ENCODE measurements at regions of chr14 and their contacts with region 1.

Region 1: GRCh38 chr14:50532502-50533240 is at the start of gene MAP4K5:
- DNase-seq: peak; percentile 94
- ATAC-seq: peak; percentile 96
- H3K4me3 Mint-ChIP-seq: peak within 1 kb of the TSS; percentile 90
- H3K27ac Mint-ChIP-seq: peak within 1 kb of the TSS; percentile 86
- H3K4me1 Mint-ChIP-seq: peaks cover 47% of the 10 kb centered on the region
- H3K27me3 Mint-ChIP-seq: no peaks in the 10 kb centered on the region
- total RNA-seq, gene MAP4K5: 19.1 to 31.2 TPM

Region 2: GRCh38 chr14:50116181-50116956 is 416.3 kb before region 1 on chr14 and contains the start of gene VCPKMT:
- CTCF ChIA-PET with region 1: interaction called, 5 read pairs
- POLR2A ChIA-PET with region 1: no interaction called
- intact Hi-C with region 1: loop called (anchors 1 to 2 kb)
- DNase-seq: peak; percentile 98
- ATAC-seq: peak; percentile 99
- H3K4me3 Mint-ChIP-seq: peak within 1 kb of the TSS; percentile 95
- H3K27ac Mint-ChIP-seq: peak within 1 kb of the TSS; percentile 97
- H3K4me1 Mint-ChIP-seq: peaks cover 25% of the 10 kb centered on the region
- H3K27me3 Mint-ChIP-seq: no peaks in the 10 kb centered on the region
- total RNA-seq, gene VCPKMT: 6.6 to 10.4 TPM

Region 3: DNA sequence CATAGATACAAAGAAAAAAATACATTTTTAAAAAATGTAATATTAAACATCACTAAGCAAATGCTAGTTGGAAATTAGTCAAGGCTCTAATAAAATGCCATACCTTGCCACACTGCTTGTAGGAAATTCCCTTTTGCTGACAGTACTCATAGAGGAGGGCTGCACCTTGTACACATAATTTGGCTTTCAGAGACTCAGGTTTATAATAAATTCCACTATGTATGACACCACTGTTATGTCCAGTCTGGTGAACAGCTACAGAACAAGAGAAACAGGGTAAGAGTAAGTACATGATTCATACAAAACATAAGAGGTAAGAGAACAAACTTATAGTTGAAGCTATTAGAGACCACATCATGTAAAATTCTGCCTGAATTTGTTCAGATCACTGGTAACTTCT is 230.8 kb before region 1 on chr14:
- CTCF ChIA-PET with region 1: no interaction called
- POLR2A ChIA-PET with region 1: no interaction called
- intact Hi-C with region 1: no loop called
- DNase-seq: no peak
- ATAC-seq: no peak
- H3K4me3 Mint-ChIP-seq: no peak overlapping the region
- H3K27ac Mint-ChIP-seq: no peak overlapping the region
- H3K4me1 Mint-ChIP-seq: peaks cover 3% of the 10 kb centered on the region
- H3K27me3 Mint-ChIP-seq: no peaks in the 10 kb centered on the region

Region 4: GRCh38 chr14:50342221-50343078 is 190.2 kb before region 1 on chr14:
- CTCF ChIA-PET with region 1: no interaction called
- POLR2A ChIA-PET with region 1: no interaction called
- intact Hi-C with region 1: loop called (anchors 1 kb)
- DNase-seq: peak; percentile 76
- ATAC-seq: no peak
- H3K4me3 Mint-ChIP-seq: no peak overlapping the region
- H3K27ac Mint-ChIP-seq: no peak overlapping the region
- H3K4me1 Mint-ChIP-seq: peaks cover 30% of the 10 kb centered on the region
- H3K27me3 Mint-ChIP-seq: peaks cover 3% of the 10 kb centered on the region

Region 5: GRCh38 chr14:50396631-50397390 is 135.9 kb before region 1 on chr14 and contains the start of gene CDKL1:
- CTCF ChIA-PET with region 1: no interaction called
- POLR2A ChIA-PET with region 1: no interaction called
- intact Hi-C with region 1: loop called in 1 of 2 experiments (anchors 2 kb)
- DNase-seq: peak; percentile 70
- ATAC-seq: peak; percentile 75
- H3K4me3 Mint-ChIP-seq: peak within 1 kb of the TSS; percentile 82
- H3K27ac Mint-ChIP-seq: peak within 1 kb of the TSS; percentile 72
- H3K4me1 Mint-ChIP-seq: peaks cover 14% of the 10 kb centered on the region
- H3K27me3 Mint-ChIP-seq: peaks cover 6% of the 10 kb centered on the region
- total RNA-seq, gene CDKL1: 2.9 to 4.4 TPM

Region 6: DNA sequence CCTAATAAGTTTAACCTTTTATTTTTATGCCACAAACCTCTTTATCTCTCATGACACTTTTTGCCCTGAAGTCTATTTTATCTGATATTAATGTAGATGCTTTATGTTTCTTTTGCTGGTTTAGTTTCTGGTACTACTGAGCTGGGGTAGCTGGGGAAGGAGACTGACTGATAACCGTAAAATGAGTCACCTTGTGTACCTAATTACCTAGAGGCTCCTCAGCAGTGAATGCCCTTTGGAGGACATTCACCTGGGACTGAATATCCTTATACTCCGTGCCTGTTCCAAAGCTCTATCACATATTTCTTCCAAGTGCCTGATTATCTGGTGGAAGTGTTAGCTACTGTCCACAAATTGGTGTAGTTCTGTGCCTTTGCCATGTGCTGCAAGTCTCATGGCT is 41.2 kb after region 1 on chr14:
- CTCF ChIA-PET with region 1: no interaction called
- POLR2A ChIA-PET with region 1: no interaction called
- intact Hi-C with region 1: no loop called
- DNase-seq: no peak
- ATAC-seq: peak; percentile 36
- H3K4me3 Mint-ChIP-seq: no peak overlapping the region
- H3K27ac Mint-ChIP-seq: no peak overlapping the region
- H3K4me1 Mint-ChIP-seq: no peaks in the 10 kb centered on the region
- H3K27me3 Mint-ChIP-seq: no peaks in the 10 kb centered on the region

Region 7: GRCh38 chr14:50667996-50668825 is 135.5 kb after region 1 on chr14 and contains the start of gene SAV1:
- CTCF ChIA-PET with region 1: no interaction called
- POLR2A ChIA-PET with region 1: no interaction called
- intact Hi-C with region 1: loop called in 1 of 2 experiments (anchors 5 kb)
- DNase-seq: peak; percentile 71
- ATAC-seq: peak; percentile 79
- H3K4me3 Mint-ChIP-seq: no peak within 1 kb of the TSS
- H3K27ac Mint-ChIP-seq: peak within 1 kb of the TSS; percentile 80
- H3K4me1 Mint-ChIP-seq: peaks cover 12% of the 10 kb centered on the region
- H3K27me3 Mint-ChIP-seq: no peaks in the 10 kb centered on the region
- total RNA-seq, gene SAV1: 13.6 TPM

Measured in activated CD4-positive, alpha-beta T cell treated with anti-CD3 and anti-CD28 coated beads for 36 hours (primary cell).